OCI-LY7 (cell line): ENCODE measurements at regions of chr6 and their contacts with region 1.

Region 1: DNA sequence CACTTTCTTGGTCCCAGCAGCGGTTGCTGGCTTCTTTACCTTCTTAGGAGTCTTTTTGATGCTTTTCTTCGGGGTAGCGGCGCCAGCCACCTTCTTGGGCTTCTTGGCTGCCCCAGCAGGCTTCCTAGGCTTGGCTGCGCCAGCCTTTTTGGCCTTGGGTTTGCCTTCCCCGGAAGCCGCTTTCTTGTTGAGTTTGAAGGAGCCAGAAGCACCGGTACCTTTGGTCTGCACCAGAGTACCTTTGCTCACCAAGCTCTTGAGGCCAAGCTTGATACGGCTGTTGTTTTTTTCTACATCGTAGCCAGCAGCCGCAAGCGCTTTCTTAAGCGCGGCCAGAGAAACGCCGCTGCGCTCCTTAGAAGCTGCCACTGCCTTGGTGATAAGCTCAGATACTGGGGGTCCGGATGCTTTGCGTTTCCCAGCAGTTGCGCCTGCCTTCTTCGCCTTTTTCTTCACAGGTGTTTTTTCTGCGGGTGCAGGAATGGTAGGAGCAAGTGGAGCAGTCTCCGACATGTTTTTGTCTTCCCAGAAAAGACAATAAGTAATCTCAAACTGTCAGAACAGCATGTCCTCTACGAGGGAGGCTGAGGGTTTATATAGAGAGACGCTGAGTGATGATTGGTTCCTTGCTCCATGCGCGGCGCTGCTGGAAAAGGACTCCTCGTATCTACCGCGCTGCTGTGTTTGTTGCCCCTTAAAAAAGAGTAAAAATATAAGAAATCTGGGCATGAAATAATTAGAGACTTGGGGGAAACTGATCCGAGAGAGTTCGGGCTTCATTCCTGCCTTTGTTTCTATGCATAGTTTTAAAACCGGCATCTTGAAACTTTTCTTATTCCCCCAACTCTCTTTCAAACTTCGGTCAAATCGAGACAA is 130.3 kb upstream of the BTN3A2 start:
- DNase-seq: peak; percentile 90
- H3K4me3 ChIP-seq: peak overlapping the region; percentile 69
- H3K27ac ChIP-seq: peak overlapping the region; percentile 92
- H3K4me1 ChIP-seq: peaks cover 26% of the 10 kb centered on the region
- CTCF ChIP-seq: no peak

Region 2: GRCh38 chr6:26204332-26205165 is 30.1 kb before region 1 on chr6:
- CTCF ChIA-PET with region 1: no interaction called
- POLR2A ChIA-PET with region 1: interaction called, 52 read pairs
- intact Hi-C with region 1: no loop called
- DNase-seq: peak; percentile 98
- H3K4me3 ChIP-seq: peak overlapping the region; percentile 79
- H3K27ac ChIP-seq: peak overlapping the region; percentile 93
- H3K4me1 ChIP-seq: peaks cover 63% of the 10 kb centered on the region
- CTCF ChIP-seq: peak; percentile 61

Region 3: GRCh38 chr6:26223650-26224546 is 10.8 kb before region 1 on chr6:
- CTCF ChIA-PET with region 1: no interaction called
- POLR2A ChIA-PET with region 1: interaction called, 75 read pairs
- intact Hi-C with region 1: no loop called
- DNase-seq: no peak
- H3K4me3 ChIP-seq: peak overlapping the region; percentile 59
- H3K27ac ChIP-seq: peak overlapping the region; percentile 60
- H3K4me1 ChIP-seq: peaks cover 60% of the 10 kb centered on the region
- CTCF ChIP-seq: no peak

Region 4: DNA sequence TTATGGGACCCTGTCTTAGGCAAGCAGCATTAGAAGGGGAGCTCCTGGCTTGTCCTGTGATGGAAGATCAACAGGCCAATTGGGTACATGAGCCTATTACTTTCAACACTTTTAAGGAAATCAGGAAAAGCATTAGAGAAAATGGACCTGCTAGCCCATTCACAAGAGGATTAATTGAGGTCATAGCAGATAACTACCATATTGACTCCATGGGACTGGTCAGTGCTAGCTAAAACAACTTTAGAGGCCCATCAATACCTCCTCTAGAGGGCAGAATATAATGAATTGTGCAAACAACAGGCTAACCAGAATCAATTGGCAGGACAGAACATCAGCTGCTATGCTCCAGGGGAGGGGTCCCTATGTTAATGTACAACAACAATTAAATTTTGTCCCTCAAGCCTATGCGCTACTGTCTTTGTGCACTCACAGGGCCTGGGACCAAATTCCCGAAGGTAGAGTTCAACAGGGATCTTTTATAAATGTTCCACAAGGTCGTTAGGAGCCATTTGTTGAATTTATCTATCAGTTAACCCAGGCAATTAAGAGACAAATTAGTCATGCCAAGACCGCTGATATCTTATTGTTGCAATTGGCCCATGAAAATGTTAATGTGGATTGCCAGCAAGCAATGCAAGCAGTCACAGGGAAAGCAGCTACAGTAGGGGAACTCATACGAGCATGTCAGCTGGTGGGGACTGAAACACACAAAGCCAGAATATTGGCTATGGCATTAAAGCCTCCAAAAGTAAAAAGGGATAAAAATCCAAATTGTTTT is 23.7 kb after region 1 on chr6:
- CTCF ChIA-PET with region 1: interaction called, 4 read pairs
- POLR2A ChIA-PET with region 1: interaction called, 55 read pairs
- intact Hi-C with region 1: no loop called
- DNase-seq: peak; percentile 33
- H3K4me3 ChIP-seq: no peak overlapping the region
- H3K27ac ChIP-seq: no peak overlapping the region
- H3K4me1 ChIP-seq: peaks cover 12% of the 10 kb centered on the region
- CTCF ChIP-seq: peak; percentile 70

Region 5: DNA sequence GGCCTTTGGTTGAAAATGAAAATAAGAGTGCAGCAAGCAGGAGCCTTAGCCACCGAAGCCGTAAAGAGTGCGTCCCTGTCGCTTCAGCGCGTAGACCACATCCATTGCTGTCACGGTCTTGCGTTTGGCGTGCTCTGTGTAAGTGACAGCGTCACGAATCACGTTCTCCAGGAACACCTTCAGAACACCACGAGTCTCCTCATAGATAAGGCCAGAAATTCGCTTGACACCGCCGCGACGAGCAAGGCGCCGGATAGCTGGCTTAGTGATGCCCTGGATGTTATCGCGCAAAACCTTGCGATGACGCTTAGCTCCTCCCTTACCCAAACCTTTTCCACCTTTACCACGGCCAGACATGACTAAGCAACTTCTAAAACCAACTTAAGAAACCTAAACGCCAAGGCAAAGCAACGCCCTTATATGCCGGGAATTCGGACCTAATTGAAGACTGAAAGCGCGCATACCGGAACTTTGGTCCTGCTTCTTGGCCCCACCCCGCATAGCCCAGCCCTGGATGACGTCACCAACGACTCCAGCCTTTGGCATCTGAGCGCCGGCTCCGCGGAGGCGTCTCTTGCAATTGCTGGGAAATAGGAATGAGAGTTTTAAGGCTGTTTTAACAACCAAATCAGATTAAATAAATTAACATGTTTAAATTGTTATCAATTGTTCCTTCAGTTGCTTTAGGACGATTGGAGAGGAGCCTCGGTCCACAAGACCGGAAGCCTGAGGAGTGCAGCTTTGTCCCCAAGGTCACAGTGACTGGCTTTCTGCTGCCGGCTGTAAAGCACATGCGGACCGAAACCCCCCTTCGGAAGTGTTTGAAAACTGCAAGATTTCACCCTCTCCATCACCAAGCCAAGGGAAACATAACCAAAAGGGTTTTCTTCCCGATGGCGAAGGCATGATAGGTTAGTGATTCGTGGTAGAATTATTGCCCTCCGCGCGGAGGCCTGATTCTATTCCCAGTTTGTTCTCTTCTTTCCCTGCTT is 50.8 kb after region 1 on chr6:
- CTCF ChIA-PET with region 1: no interaction called
- POLR2A ChIA-PET with region 1: interaction called, 23 read pairs
- intact Hi-C with region 1: no loop called
- DNase-seq: peak; percentile 99
- H3K4me3 ChIP-seq: peak overlapping the region; percentile 80
- H3K27ac ChIP-seq: peak overlapping the region; percentile 96
- H3K4me1 ChIP-seq: peaks cover 32% of the 10 kb centered on the region
- CTCF ChIP-seq: 0 out of 2 replicates have a peak, but pooled peaks have one; percentile 0